ENCODE measurements at regions of chr2 and their contacts with region 1.

Region 1: GRCh38 chr2:25184261-25184695 is 15.9 kb upstream of the POMC start:
- DNase-seq: no peak
- ATAC-seq: no peak
- H3K4me3 ChIP-seq: no peak overlapping the region
- H3K4me3 Mint-ChIP-seq: no peak overlapping the region
- H3K27ac ChIP-seq: no peak overlapping the region
- H3K27ac Mint-ChIP-seq: peak overlapping the region; percentile 8
- H3K4me1 ChIP-seq: no peaks in the 10 kb centered on the region
- H3K4me1 Mint-ChIP-seq: no peaks in the 10 kb centered on the region
- H3K27me3 ChIP-seq: peaks cover 0 to 4% (median 0%) of the 10 kb centered on the region in 4 experiments
- H3K27me3 Mint-ChIP-seq: peaks cover 20% of the 10 kb centered on the region
- CTCF ChIP-seq: no peak

Region 2: DNA sequence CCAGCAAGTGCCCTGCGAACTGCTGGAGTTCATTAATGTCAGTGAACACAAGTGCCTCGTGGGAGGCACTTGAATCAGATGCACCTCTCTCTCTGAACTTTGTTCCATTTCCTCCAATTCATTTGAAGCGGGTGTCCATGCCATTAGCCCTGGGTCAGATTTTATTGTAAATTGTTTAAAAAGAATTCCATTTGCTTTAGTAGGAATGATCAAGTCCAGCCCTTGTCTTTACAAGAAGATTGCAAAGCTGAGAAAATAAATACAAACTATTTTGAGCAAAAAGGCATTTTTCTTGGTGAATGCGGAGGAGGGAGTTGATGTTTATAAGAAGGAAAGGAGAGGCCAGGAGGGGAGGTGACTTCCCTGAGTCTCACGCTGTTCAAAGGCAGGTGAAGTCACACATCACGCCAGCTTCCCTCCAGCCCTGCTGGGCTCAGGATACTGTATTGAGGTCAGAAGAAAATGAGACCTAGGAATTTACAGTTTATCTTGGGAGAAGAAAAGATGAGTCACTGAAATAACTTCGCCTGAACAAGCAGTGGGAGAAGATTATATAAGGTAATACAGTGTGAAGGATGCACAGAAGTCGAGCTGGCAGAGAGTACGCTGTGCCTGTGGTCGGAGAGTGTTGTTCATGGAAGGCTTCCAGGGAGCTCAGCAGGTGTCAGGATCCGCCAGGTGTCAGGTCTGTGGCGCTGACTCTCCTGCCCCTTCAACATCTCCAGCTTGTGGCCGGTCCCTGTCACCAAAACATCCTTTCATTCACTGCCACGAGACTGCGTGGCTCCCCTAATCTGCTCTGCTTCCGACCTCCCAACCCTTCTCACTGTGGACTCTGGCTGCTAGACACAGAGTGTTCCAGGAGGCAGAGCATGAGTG is 105.9 kb before region 1 on chr2:
- CTCF ChIA-PET with region 1: no interaction called
- POLR2A ChIA-PET with region 1: interaction called, 10 read pairs
- intact Hi-C with region 1: no loop called
- DNase-seq: no peak
- ATAC-seq: no peak
- H3K4me3 ChIP-seq: no peak overlapping the region
- H3K4me3 Mint-ChIP-seq: no peak overlapping the region
- H3K27ac ChIP-seq: no peak overlapping the region
- H3K27ac Mint-ChIP-seq: no peak overlapping the region
- H3K4me1 ChIP-seq: no peaks in the 10 kb centered on the region
- H3K4me1 Mint-ChIP-seq: peaks cover 10% of the 10 kb centered on the region
- H3K27me3 ChIP-seq: peaks cover 0 to 4% (median 3%) of the 10 kb centered on the region in 4 experiments
- H3K27me3 Mint-ChIP-seq: peaks cover 19% of the 10 kb centered on the region
- CTCF ChIP-seq: no peak